ENCODE measurements at regions of chr1 and their contacts with region 1.

Region 1: DNA sequence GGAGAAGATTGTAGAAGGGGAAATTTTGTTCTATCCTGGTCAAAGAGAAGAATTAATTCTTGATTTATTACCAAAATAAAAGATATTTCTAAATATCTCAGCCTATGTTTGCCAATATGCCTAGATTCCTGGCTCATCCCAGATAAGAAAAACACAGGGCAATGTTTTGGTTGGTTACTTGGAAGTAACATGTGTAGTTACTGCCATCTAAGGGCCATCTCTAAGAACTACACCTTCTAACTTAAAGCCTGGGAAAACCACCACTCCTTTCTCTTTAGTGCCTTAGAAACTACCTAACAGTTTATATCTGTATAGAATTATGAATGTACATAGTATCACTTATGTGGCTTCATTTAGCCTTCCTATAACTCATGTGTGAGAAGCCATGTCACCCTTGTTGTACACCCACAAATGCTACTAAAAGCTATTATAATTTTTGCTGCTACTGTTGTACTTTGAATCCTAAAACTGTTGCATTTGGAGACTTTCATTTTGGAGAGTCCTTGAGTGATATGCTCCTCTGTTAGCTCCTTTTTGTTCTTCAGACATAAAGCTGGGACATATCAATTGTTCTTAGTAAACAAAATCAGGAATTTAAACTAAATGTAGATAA is 4.5 kb downstream of the AIM2 start:
- DNase-seq: no peak
- H3K4me3 Mint-ChIP-seq: peak overlapping the region; percentile 71
- H3K27ac Mint-ChIP-seq: peak overlapping the region; percentile 78
- H3K4me1 Mint-ChIP-seq: peaks cover 54% of the 10 kb centered on the region
- H3K27me3 Mint-ChIP-seq: no peaks in the 10 kb centered on the region

Region 2: DNA sequence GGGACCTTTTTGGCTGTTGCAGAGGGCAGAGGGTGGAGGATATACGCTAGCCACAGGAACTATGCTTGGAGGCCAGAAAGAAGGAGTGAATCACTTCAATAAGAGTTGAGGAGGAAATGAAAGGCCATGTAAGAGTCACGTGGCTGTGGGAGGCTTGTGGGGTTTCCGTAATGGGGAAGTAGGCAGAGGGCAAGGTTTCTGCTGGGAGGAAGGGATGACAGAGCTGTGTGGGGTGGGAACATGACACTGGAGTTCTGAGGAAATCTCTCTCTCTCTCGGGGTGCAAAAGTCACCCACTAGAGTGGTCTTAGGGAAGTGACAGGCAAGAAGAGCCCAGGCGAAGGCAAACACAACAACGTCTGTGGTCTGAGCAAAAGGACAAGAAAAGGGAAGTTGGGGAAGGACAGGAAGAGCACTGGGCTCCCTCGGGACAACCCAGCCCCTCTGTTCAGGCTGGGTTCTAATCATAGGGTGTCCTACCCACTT is 786.3 kb before region 1 on chr1:
- intact Hi-C with region 1: loop called (anchors 10 kb)
- DNase-seq: no peak
- H3K4me3 Mint-ChIP-seq: no peak overlapping the region
- H3K27ac Mint-ChIP-seq: peak overlapping the region; percentile 69
- H3K4me1 Mint-ChIP-seq: peaks cover 26% of the 10 kb centered on the region
- H3K27me3 Mint-ChIP-seq: peaks cover 3% of the 10 kb centered on the region

Region 3: DNA sequence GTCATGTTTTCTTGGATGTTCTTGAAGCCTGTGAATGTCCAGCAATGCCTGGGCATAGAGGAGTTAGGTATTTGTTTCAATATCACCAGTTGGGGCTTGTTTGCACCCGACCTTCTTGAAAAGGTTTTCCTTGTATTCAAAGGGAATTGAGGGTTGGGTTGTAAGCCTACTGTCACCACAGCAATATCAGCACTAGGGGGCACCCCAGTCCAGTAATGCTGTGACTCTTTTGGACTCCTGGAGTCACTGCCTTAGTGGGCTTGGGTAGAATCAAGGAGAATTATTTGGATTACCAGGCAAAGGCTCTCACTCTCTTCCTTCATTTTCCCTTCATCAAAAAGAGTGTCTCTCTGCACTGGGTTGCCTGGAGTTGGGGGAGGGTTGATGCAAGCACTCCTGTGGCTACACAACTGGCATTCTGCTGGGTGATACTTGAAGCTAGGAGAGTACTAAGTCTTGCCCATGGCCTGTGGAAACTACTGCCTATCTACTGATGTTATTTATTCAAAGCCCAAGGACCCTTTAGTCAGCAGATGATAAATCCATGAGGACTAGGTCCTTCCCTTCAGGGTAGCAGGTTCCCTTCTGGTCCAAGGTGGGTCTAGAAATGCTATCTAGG is 565.6 kb before region 1 on chr1:
- intact Hi-C with region 1: loop called (anchors 1 kb)
- DNase-seq: peak; percentile 17
- H3K4me3 Mint-ChIP-seq: no peak overlapping the region
- H3K27ac Mint-ChIP-seq: no peak overlapping the region
- H3K4me1 Mint-ChIP-seq: no peaks in the 10 kb centered on the region
- H3K27me3 Mint-ChIP-seq: peaks cover 35% of the 10 kb centered on the region

Region 4: GRCh38 chr1:158675563-158676323 is 396.3 kb before region 1 on chr1:
- intact Hi-C with region 1: no loop called
- DNase-seq: no peak
- H3K4me3 Mint-ChIP-seq: no peak overlapping the region
- H3K27ac Mint-ChIP-seq: no peak overlapping the region
- H3K4me1 Mint-ChIP-seq: peaks cover 4% of the 10 kb centered on the region
- H3K27me3 Mint-ChIP-seq: peaks cover 16% of the 10 kb centered on the region

Region 5: DNA sequence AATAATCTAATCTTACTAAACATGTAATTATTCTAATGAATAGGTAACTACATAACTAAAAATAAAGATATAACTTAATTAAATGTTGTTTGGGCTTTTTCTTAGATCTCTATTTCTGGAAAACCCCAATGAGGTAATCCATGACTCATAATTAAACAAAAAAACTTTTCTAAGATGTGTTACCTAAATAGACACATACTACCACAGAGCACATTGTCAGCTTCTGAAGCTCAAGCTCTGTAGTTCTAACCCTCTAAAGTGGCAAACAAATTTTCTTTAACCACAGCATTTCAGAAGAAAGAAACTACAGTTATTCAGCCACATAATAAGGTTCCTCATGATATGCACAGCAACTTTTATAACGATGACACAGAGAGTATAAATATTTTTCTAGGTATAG is 355.7 kb before region 1 on chr1:
- intact Hi-C with region 1: loop called (anchors 10 kb)
- DNase-seq: no peak
- H3K4me3 Mint-ChIP-seq: no peak overlapping the region
- H3K27ac Mint-ChIP-seq: peak overlapping the region; percentile 9
- H3K4me1 Mint-ChIP-seq: peaks cover 15% of the 10 kb centered on the region
- H3K27me3 Mint-ChIP-seq: peaks cover 10% of the 10 kb centered on the region

Region 6: GRCh38 chr1:159055181-159055641 is 16.9 kb before region 1 on chr1:
- intact Hi-C with region 1: loop called (anchors 2 kb)
- DNase-seq: no peak
- H3K4me3 Mint-ChIP-seq: no peak overlapping the region
- H3K27ac Mint-ChIP-seq: peak overlapping the region; percentile 71
- H3K4me1 Mint-ChIP-seq: peaks cover 46% of the 10 kb centered on the region
- H3K27me3 Mint-ChIP-seq: no peaks in the 10 kb centered on the region